SK-N-SH (cell line): ENCODE measurements at regions of chr19 and their contacts with region 1.

Region 1: GRCh38 chr19:45079063-45079910 is at the start of gene GEMIN7:
- DNase-seq: peak; percentile 96
- H3K4me3 ChIP-seq: peak within 1 kb of the TSS; percentile 84 to 99
- H3K27ac ChIP-seq: peak within 1 kb of the TSS; percentile 68 to 71
- H3K4me1 ChIP-seq: peaks cover 0 to 9% of the 10 kb centered on the region in 2 experiments; a peak in 1 of 4 replicates
- H3K27me3 ChIP-seq: no peaks in the 10 kb centered on the region
- CTCF ChIP-seq: no peak; the same call in 1 of the 2 replicates
- EP300 ChIP-seq: 0 out of 4 replicates have a peak, but pooled peaks of 1 of the 2 experiments have one; percentile 14
- RAD21 ChIP-seq: no peak
- polyA plus RNA-seq, gene GEMIN7: 24.2 and 28.7 TPM in 2 replicates

Region 2: GRCh38 chr19:45047188-45047797 is 32.0 kb before region 1 on chr19:
- CTCF ChIA-PET with region 1: no interaction called
- POLR2A ChIA-PET with region 1: no interaction called
- DNase-seq: no peak
- H3K4me3 ChIP-seq: no peak overlapping the region
- H3K27ac ChIP-seq: no peak overlapping the region
- H3K4me1 ChIP-seq: no peaks in the 10 kb centered on the region; a peak in 1 of 4 replicates
- H3K27me3 ChIP-seq: no peaks in the 10 kb centered on the region
- CTCF ChIP-seq: no peak
- EP300 ChIP-seq: no peak
- RAD21 ChIP-seq: no peak

Region 3: DNA sequence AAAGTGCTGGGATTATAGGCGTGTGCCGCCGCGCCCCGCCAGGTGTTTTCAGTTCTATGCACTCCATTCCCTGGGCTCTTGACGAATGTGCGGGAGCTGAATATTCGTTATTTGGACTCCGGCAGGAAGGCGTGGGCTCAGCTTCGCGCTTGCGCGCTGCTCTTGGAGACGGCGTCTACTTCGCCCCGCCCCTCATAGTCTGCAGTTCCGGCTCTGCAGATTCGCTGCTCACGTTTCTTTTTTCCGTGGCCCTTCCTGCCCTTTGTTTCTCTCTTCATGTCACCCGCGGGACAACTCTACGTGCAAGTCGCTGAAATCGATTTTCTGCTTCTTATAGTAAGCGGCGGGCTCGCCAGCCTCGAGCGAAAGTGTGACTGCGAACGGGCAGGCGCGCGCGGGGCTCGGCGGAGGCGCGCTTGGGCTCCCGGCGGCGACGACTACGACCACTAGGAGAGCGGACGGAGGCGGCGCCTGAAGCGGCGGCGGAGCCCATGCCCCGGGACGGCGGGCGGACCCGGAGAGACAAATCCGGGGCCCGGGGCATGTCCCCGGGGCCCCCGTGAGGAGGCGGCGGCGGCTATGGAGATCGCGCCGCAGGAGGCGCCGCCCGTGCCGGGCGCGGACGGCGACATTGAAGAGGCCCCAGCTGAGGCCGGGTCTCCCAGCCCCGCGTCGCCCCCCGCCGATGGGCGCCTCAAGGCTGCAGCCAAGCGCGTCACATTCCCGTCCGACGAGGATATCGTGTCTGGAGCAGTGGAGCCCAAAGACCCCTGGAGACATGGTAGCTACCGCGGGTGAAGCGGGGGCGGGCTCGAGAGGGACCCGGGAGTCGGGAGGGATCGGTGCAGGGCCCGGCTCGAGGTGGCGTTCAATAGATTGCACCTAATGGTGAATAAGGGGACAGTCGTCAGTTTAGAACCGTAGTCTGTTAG is 13.7 kb after region 1 on chr19 and contains the start of gene PPP1R37:
- CTCF ChIA-PET with region 1: interaction called, 3 read pairs
- POLR2A ChIA-PET with region 1: interaction called, 19 read pairs
- DNase-seq: peak; percentile 96
- H3K4me3 ChIP-seq: peak within 1 kb of the TSS; percentile 78 to 98
- H3K27ac ChIP-seq: peak within 1 kb of the TSS; percentile 94 to 95
- H3K4me1 ChIP-seq: peaks cover 17 to 28% of the 10 kb centered on the region in 2 experiments; a peak in 3 of 4 replicates
- H3K27me3 ChIP-seq: no peaks in the 10 kb centered on the region
- CTCF ChIP-seq: peak; percentile 35
- EP300 ChIP-seq: peak; percentile 82 to 98; a peak in 3 of 4 replicates
- RAD21 ChIP-seq: no peak
- polyA plus RNA-seq, gene PPP1R37: 19.3 and 24.4 TPM in 2 replicates

Region 4: DNA sequence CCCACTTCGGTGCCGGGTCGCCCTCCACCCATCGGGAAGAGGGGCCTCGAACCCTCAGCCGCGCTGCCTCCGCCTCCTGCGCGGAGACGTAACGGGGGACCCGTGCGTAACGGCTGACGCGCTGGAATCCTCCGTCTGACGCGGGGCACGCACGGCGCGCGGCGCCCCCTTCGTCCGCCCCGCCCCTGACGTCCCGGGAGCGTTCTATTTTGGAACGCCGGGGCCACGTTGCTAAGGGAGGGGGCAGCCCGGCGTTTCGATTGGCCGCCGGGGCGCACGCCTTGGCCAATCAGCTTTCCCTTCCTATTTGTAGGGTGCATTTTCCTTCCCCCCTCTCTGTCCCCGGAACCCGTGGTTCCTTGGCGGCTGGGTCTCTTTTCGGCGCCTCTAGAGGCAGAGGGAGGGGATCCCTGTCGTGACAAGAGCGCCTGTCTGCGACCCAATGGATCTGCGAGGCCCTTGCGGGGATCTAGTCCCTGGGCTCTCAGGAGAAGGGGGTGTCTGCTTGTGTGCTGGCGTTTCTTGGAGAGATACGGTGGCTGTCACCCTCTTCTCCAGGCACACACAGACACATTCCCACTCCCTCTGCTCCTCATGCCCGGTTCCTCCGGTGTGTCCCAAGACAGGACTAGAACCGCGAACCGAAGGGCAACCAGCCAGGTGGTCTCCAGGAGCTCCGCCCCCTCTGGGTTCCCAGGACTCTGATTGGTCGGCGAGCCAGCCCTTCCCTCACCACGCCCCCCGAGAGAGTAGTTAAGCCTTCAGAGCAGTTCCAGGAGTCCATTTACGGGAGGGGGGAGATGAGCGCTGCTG is 390.1 kb after region 1 on chr19:
- CTCF ChIA-PET with region 1: no interaction called
- POLR2A ChIA-PET with region 1: interaction called, 10 read pairs
- DNase-seq: peak; percentile 93
- H3K4me3 ChIP-seq: peak overlapping the region; percentile 81 to 84
- H3K27ac ChIP-seq: peak overlapping the region; percentile 78 to 95
- H3K4me1 ChIP-seq: peaks cover 0 to 19% of the 10 kb centered on the region in 2 experiments; a peak in 1 of 4 replicates
- H3K27me3 ChIP-seq: no peaks in the 10 kb centered on the region
- CTCF ChIP-seq: no peak
- EP300 ChIP-seq: no peak
- RAD21 ChIP-seq: no peak